ENCODE measurements at regions of chr1 and their contacts with region 1.

Region 1: DNA sequence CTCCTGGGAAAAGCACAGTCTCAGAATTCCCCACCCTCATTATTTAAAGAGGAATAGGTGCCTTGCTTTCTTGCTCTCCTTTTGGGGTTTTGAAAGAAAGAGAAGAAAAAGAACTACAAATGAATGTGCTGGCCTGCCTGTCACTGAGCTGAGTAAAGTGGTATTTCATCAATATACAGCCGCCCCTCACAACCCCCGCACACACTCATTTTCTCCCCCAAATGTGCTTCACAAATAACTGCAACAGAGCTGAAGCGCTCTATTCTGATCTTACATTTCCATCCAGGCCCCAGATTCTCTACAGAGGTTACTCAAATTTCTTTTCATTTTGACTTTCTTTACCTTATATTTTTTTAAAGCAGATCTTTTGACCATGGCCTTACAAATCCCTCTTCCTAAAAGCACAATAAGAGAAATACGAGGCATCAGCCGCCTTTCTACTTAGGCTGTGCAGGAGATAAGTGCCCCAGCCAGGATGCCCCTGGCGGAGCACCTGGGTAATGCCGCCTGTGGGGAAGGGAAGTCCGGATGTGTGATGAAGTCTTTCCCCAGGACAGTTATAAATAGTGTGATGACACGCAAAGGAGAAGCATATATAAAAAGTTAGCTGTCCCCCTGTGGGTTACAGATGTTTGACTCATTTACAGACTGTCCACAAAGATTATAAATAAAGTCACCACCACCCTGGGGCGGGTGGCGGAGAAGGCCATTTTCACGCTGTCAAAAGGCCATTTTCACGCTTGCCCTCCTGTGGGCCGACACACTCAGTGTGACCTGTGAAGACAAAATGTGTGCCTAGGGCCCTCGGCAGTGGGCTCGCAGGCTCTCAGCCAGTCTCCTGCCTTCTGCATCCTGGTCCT is 6.5 kb downstream of the KCNN3 start:
- DNase-seq: peak; percentile 41
- ATAC-seq: peak; percentile 65
- H3K4me3 ChIP-seq: no peak overlapping the region
- H3K27ac ChIP-seq: no peak overlapping the region
- H3K4me1 ChIP-seq: no peaks in the 10 kb centered on the region; the same call in 1 of the 2 replicates
- H3K27me3 ChIP-seq: peaks cover 2% of the 10 kb centered on the region; the same call in 1 of the 2 replicates
- CTCF ChIP-seq: peak; percentile 87

Region 2: GRCh38 chr1:154539507-154540483 is 323.8 kb before region 1 on chr1:
- CTCF ChIA-PET with region 1: interaction called, 12 read pairs
- POLR2A ChIA-PET with region 1: no interaction called
- in situ Hi-C with region 1: no loop called
- intact Hi-C with region 1: no loop called
- DNase-seq: no peak
- ATAC-seq: no peak
- H3K4me3 ChIP-seq: no peak overlapping the region
- H3K27ac ChIP-seq: no peak overlapping the region
- H3K4me1 ChIP-seq: no peaks in the 10 kb centered on the region
- H3K27me3 ChIP-seq: peaks cover 2% of the 10 kb centered on the region; the same call in 1 of the 2 replicates
- CTCF ChIP-seq: no peak

Measured in Panc1 (cell line).